Esophagus squamous epithelium (tissue), 5 donors: ENCODE measurements at regions of chr17 and their contacts with region 1.

Region 1: GRCh38 chr17:34637548-34638525 is 58.5 kb downstream of the TMEM132E start:
- DNase-seq: peak; percentile 6
- H3K4me3 ChIP-seq: peak overlapping the region; percentile 11 to 57 (median 38)
- H3K27ac ChIP-seq: no peak overlapping the region
- H3K4me1 ChIP-seq: peaks cover 5 to 13% (median 7%) of the 10 kb centered on the region in 3 donors
- H3K27me3 ChIP-seq: peaks cover 0 to 94% (median 0%) of the 10 kb centered on the region in 4 donors
- CTCF ChIP-seq: peak; percentile 63 to 85 (median 79)
- POLR2A ChIP-seq: no peak

Region 2: GRCh38 chr17:34420254-34420766 is 217.5 kb before region 1 on chr17:
- intact Hi-C with region 1: loop called (anchors 10 kb)
- DNase-seq: no peak
- H3K4me3 ChIP-seq: no peak overlapping the region
- H3K27ac ChIP-seq: no peak overlapping the region
- H3K4me1 ChIP-seq: peaks cover 0 to 6% (median 0%) of the 10 kb centered on the region in 3 donors
- H3K27me3 ChIP-seq: peaks cover 3 to 86% (median 3%) of the 10 kb centered on the region in 4 donors
- CTCF ChIP-seq: peak; percentile 66 to 95 (median 84)
- POLR2A ChIP-seq: no peak

Region 3: GRCh38 chr17:34692920-34693319 is 55.1 kb after region 1 on chr17:
- intact Hi-C with region 1: no loop called
- DNase-seq: no peak
- H3K4me3 ChIP-seq: no peak overlapping the region
- H3K27ac ChIP-seq: no peak overlapping the region
- H3K4me1 ChIP-seq: no peaks in the 10 kb centered on the region
- H3K27me3 ChIP-seq: no peaks in the 10 kb centered on the region
- CTCF ChIP-seq: no peak
- POLR2A ChIP-seq: no peak